ENCODE measurements at regions of chr12 and their contacts with region 1.

Region 1: DNA sequence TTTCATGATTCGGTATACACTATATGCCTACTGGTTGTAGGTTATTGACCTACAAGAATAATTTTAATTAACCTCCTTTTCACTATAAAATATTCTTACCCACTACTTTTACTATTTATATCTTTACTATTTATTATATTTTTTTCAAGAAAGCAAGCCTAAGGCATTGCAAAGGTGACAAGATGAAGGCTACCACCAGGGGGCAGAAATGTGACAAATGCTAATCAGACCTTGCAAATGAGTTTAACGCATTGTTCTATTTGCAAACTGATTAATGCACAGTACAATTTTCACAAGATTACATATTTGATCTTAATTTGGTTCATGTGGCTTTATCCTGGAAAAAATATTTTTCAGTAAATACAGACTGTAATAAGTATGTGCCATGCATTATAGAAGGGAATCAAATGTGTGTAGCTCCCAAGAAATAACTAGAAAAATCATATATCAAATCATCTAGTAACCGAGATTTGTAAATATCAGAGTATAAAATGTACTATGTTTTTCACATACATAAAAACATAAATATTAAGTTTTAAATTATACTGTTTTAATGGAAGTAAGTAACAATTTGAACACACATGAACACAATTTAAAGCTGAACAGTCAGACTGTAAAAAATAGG is 107.0 kb downstream of the ADAMTS20 start:
- DNase-seq: peak; percentile 45
- H3K4me3 ChIP-seq: no peak overlapping the region
- H3K27ac ChIP-seq: no peak overlapping the region
- H3K4me1 ChIP-seq: no peaks in the 10 kb centered on the region
- H3K27me3 ChIP-seq: peaks cover 2% of the 10 kb centered on the region
- CTCF ChIP-seq: peak; percentile 82 to 86

Region 2: GRCh38 chr12:43381879-43382278 is 63.2 kb before region 1 on chr12:
- CTCF ChIA-PET with region 1: no interaction called
- dilution Hi-C with region 1: no loop called
- in situ Hi-C with region 1: no loop called
- intact Hi-C with region 1: no loop called
- DNase-seq: no peak
- H3K4me3 ChIP-seq: no peak overlapping the region
- H3K27ac ChIP-seq: no peak overlapping the region
- H3K4me1 ChIP-seq: no peaks in the 10 kb centered on the region
- H3K27me3 ChIP-seq: no peaks in the 10 kb centered on the region
- CTCF ChIP-seq: no peak

Region 3: DNA sequence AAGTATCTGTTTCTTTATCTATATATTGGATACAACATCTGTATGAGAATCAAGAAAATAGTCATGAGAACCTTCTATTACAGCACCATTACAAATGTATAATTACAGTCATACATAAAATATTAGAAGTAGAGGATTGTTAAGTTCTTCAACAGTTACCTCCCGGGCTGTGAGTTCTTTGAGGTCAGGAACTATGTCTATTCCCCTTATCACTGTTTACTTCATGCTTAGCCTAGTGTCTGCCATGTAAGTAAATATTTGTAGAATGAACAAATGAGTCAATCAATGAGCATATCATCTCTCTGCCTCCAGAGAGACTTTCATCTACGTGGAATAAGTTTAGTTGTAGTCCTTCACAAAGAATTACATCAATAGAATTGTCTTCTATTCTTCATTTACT is 266.3 kb after region 1 on chr12:
- CTCF ChIA-PET with region 1: no interaction called
- dilution Hi-C with region 1: no loop called
- in situ Hi-C with region 1: no loop called
- intact Hi-C with region 1: loop called (anchors 10 kb)
- DNase-seq: no peak
- H3K4me3 ChIP-seq: no peak overlapping the region
- H3K27ac ChIP-seq: no peak overlapping the region
- H3K4me1 ChIP-seq: no peaks in the 10 kb centered on the region
- H3K27me3 ChIP-seq: peaks cover 9% of the 10 kb centered on the region
- CTCF ChIP-seq: no peak